Colonic mucosa (tissue), 4 donors: ENCODE measurements at regions of chr2 and their contacts with region 1.

Region 1: GRCh38 chr2:179226203-179226960 is 38.2 kb downstream of the SESTD1 start:
- DNase-seq: no peak
- H3K4me3 ChIP-seq: no peak overlapping the region
- H3K27ac ChIP-seq: no peak overlapping the region
- H3K4me1 ChIP-seq: no peaks in the 10 kb centered on the region
- H3K27me3 ChIP-seq: no peaks in the 10 kb centered on the region
- CTCF ChIP-seq: no peak

Region 2: GRCh38 chr2:179340668-179341067 is 114.3 kb after region 1 on chr2:
- intact Hi-C with region 1: loop called (anchors 10 kb)
- DNase-seq: no peak
- H3K4me3 ChIP-seq: no peak overlapping the region
- H3K27ac ChIP-seq: no peak overlapping the region
- H3K4me1 ChIP-seq: no peaks in the 10 kb centered on the region
- H3K27me3 ChIP-seq: no peaks in the 10 kb centered on the region
- CTCF ChIP-seq: no peak

Region 3: GRCh38 chr2:179440642-179441251 is 214.4 kb after region 1 on chr2:
- intact Hi-C with region 1: loop called (anchors 10 kb)
- DNase-seq: no peak
- H3K4me3 ChIP-seq: no peak overlapping the region
- H3K27ac ChIP-seq: no peak overlapping the region
- H3K4me1 ChIP-seq: no peaks in the 10 kb centered on the region
- H3K27me3 ChIP-seq: no peaks in the 10 kb centered on the region
- CTCF ChIP-seq: peak; percentile 61